Common myeloid progenitor, CD34-positive (primary cell): ENCODE measurements at regions of chr1 and their contacts with region 1.

Region 1: DNA sequence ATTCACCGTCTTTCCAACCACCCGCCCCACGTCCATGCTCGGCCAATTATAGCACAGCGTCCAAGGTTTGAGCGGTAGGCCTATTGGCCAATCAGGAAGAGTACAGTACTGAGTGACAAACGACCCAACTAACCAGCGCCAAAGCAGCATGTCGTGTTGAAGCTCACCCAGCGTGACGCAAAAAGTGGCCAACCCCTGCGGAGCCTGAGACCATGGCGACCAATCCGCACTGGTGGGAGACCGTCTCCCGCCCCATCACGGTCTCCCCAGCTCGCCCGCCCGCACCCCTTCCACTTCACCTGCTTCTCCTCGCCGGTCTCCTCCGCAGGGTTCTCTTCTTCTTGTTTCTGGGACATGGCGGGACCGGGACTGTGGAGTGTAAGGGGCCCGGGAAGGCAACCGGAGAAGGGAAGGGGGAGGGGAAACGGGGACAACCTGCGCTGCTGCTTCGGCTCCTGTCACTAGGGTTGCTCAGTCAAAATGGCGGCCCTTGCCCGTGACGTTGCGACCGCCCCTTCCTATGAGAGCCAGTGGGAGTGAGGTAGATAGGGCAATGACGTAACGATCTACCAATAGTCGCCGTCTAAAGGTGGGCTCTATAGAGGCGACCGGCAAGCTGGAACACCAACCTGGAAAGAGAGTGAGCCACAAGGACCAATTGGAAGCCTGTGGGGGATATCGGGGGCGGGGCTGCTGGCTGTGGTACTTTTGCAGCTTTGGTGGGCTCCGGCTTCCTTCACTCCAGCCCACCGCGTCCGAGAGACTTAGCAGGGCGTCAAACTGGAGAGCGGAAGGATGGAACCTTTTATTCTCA is at the start of gene ENSA:
- DNase-seq: peak; percentile 100
- H3K4me3 ChIP-seq: peak within 1 kb of the TSS; percentile 61 to 92 (median 82)
- H3K27ac ChIP-seq: peak within 1 kb of the TSS; percentile 97 to 99
- H3K4me1 ChIP-seq: peaks cover 16 to 23% (median 19%) of the 10 kb centered on the region in 4 experiments
- H3K27me3 ChIP-seq: no peaks in the 10 kb centered on the region

Region 2: DNA sequence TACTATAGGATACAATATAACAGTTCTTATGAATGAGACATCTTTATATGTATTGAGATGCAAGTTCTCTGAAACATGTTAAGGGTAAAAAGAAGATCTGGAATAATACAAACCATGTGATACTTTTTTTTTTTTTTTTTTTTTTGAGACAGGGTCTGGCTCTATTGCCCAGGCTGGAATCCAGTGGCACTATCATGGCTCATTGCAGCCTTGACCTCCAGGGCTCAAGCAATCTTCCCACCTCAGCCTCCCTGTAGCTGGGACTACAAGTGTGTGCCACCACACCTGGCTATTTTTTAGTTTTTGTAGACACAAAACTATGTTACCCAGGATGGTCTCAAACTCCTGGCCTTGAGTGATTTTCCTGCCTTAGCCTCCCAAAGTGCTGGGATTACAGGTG is 27.8 kb before region 1 on chr1:
- CTCF ChIA-PET with region 1: no interaction called
- POLR2A ChIA-PET with region 1: no interaction called
- DNase-seq: no peak
- H3K4me3 ChIP-seq: no peak overlapping the region
- H3K27ac ChIP-seq: no peak overlapping the region
- H3K4me1 ChIP-seq: no peaks in the 10 kb centered on the region
- H3K27me3 ChIP-seq: no peaks in the 10 kb centered on the region

Region 3: GRCh38 chr1:150613061-150613920 is 16.0 kb before region 1 on chr1:
- CTCF ChIA-PET with region 1: interaction called, 36 read pairs
- POLR2A ChIA-PET with region 1: interaction called, 11 read pairs
- DNase-seq: peak; percentile 93 to 98 (median 97)
- H3K4me3 ChIP-seq: peak overlapping the region in 6 of 7 experiments; percentile 22 to 68 (median 44)
- H3K27ac ChIP-seq: peak overlapping the region; percentile 99
- H3K4me1 ChIP-seq: peaks cover 19 to 62% (median 53%) of the 10 kb centered on the region in 4 experiments
- H3K27me3 ChIP-seq: no peaks in the 10 kb centered on the region

Region 4: DNA sequence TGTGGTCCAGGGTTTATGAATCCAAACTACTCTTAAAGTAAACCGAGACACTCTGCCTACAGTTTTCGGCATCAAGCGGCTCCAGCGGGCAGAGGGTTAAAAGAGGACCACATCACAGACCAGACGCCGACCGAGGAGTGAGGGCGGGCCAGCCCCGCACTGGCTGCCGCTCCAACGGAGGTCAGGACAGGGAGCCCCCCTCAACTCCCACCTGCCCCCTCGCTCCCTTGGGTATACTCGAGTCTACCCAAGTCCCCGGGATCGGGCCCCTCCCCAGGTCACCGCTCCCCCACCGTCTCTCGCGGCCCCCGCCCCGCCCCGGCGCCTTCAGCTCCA is 246.8 kb after region 1 on chr1:
- CTCF ChIA-PET with region 1: no interaction called
- POLR2A ChIA-PET with region 1: no interaction called
- DNase-seq: peak in 1 of 3 donors; percentile 79
- H3K4me3 ChIP-seq: peak overlapping the region; percentile 73 to 95 (median 85)
- H3K27ac ChIP-seq: peak overlapping the region; percentile 66 to 85
- H3K4me1 ChIP-seq: peaks cover 7 to 19% (median 15%) of the 10 kb centered on the region in 4 experiments
- H3K27me3 ChIP-seq: no peaks in the 10 kb centered on the region